ENCODE measurements at regions of chr11 and their contacts with region 1.

Region 1: DNA sequence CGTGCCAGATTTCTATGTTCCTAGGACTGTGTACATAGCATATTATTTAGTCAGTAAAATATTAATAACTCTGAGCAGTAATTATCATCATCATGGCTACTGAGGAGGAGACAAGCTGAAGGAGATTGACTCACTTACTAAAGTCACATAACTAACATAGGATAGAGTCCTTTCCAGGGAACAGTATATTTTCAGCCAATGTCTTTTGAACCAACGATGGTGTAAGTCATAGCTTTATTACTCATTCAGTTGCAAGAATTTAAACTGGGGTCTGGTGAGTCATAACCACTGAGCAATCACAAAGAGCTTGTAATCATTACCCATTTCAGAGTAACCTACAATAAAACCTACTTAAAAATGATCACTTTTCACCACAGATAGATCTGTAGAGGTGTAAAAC is 1564.8 kb upstream of the TENM4 start:
- DNase-seq: peak; percentile 66
- H3K4me3 ChIP-seq: no peak overlapping the region
- H3K27ac ChIP-seq: no peak overlapping the region
- H3K4me1 ChIP-seq: peaks cover 10% of the 10 kb centered on the region
- H3K27me3 ChIP-seq: no peaks in the 10 kb centered on the region
- CTCF ChIP-seq: no peak

Region 2: GRCh38 chr11:79708300-79708932 is 1297.2 kb before region 1 on chr11:
- CTCF ChIA-PET with region 1: no interaction called
- POLR2A ChIA-PET with region 1: no interaction called
- intact Hi-C with region 1: loop called (anchors 5 kb)
- DNase-seq: peak; percentile 74
- H3K4me3 ChIP-seq: no peak overlapping the region
- H3K27ac ChIP-seq: no peak overlapping the region
- H3K4me1 ChIP-seq: no peaks in the 10 kb centered on the region
- H3K27me3 ChIP-seq: no peaks in the 10 kb centered on the region
- CTCF ChIP-seq: peak; percentile 64

Region 3: GRCh38 chr11:80163011-80163410 is 842.6 kb before region 1 on chr11:
- CTCF ChIA-PET with region 1: no interaction called
- POLR2A ChIA-PET with region 1: no interaction called
- intact Hi-C with region 1: loop called (anchors 10 kb)
- DNase-seq: no peak
- H3K4me3 ChIP-seq: no peak overlapping the region
- H3K27ac ChIP-seq: no peak overlapping the region
- H3K4me1 ChIP-seq: no peaks in the 10 kb centered on the region
- H3K27me3 ChIP-seq: no peaks in the 10 kb centered on the region
- CTCF ChIP-seq: no peak

Region 4: DNA sequence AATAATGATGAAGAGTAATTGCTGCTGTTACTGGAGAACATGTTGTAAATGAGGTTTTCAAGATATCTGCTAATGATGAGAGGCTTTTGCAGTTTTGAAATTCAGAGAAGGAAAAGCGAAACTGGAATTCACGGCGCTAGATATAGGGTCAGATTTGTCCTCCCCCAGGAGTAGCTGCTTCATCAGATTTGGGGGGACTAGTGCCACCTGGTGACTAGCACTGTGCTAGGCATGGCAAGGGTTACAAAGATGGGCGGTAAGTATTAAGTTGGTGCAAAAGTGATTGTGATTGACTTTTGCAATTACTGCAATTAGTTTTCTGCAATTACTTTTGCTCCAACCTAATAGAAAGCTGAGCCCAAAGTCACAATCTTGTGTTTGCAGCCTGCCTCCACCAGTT is 684.8 kb before region 1 on chr11:
- CTCF ChIA-PET with region 1: no interaction called
- POLR2A ChIA-PET with region 1: no interaction called
- intact Hi-C with region 1: loop called (anchors 10 kb)
- DNase-seq: peak; percentile 38
- H3K4me3 ChIP-seq: peak overlapping the region; percentile 23
- H3K27ac ChIP-seq: no peak overlapping the region
- H3K4me1 ChIP-seq: no peaks in the 10 kb centered on the region
- H3K27me3 ChIP-seq: no peaks in the 10 kb centered on the region
- CTCF ChIP-seq: peak; percentile 61

Region 5: DNA sequence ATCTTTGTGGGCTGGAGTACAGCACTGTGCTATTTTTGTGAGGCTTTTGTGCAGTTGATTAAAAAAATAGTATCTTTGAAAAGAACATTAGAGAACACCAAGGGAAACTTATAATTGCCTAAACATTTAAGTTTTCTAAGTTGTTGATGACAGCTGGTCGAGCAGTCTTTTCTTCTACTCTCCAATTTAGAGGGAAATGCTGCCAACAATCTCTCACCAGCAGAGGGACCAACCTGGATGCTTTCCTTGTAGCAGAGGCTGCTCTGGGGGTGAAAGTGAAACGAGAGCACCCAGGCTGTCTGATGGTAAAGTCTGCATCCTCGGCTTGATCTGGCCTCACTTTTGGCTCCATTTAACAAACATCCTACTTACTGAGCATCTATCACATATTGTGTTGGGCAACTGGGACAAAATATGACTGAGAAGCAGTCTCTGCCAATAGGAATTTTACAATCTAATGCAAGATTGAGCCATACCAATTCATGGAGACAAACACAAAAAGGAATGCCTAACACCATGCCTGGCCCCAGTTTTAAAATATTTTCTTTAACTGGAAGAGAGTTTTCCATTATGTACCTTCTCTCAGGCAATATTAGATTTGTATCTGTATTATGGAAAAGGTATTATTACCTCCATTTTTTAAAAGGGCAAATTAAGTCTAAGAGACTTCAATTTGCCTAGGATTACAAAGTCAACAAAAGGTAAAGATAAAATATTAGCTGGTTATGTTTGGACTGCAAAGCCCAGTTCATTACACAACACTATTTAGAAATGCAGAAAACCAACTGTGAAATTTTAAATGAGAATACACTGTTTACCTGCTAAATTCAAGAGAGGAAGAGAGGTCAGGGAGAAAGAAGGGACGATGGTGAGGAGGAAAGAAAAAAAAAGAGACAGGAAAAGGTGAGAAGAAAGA is 278.0 kb before region 1 on chr11:
- CTCF ChIA-PET with region 1: no interaction called
- POLR2A ChIA-PET with region 1: no interaction called
- intact Hi-C with region 1: loop called (anchors 10 kb)
- DNase-seq: peak; percentile 66
- H3K4me3 ChIP-seq: no peak overlapping the region
- H3K27ac ChIP-seq: no peak overlapping the region
- H3K4me1 ChIP-seq: peaks cover 8% of the 10 kb centered on the region
- H3K27me3 ChIP-seq: no peaks in the 10 kb centered on the region
- CTCF ChIP-seq: peak; percentile 68